ENCODE measurements at regions of chr16 and their contacts with region 1.

Region 1: GRCh38 chr16:29815793-29816693 is at the start of gene PAGR1:
- DNase-seq: peak; percentile 99
- ATAC-seq: peak; percentile 87
- H3K4me3 ChIP-seq: peak within 1 kb of the TSS; percentile 44 to 60
- H3K27ac ChIP-seq: peak within 1 kb of the TSS; percentile 10 to 79
- H3K4me1 ChIP-seq: no peaks in the 10 kb centered on the region
- H3K27me3 ChIP-seq: no peaks in the 10 kb centered on the region
- total RNA-seq, gene PAGR1: 14.9 to 29.7 TPM

Region 2: DNA sequence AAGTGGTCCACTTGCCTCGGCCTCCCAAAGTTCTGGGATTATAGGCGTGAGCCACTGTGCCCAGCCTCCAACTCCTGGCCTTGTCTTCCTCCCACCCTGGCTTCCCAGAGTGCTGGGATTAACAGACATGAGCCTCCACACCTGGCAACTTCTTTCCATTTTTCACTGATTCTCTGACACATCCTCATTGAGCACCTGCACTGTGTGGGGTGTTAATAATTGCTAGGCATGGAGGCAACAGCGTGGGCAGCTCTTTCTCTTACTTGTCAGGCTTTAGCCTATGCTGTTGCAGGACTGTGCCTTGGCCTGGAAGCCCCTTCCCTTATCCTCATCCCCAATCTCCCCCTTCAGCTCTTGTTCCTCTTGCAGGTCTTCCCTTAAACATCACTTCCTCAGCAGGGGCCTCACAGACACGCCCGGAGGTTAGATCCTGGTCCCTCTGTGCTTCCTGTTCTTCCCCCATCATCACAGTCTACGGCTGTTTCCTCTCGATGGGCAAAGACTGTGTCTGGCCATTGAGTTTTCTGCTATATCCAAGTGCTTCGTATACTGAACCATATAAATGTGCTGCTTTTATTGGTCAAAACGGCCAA is 129.2 kb before region 1 on chr16:
- intact Hi-C with region 1: no loop called
- DNase-seq: no peak
- ATAC-seq: no peak
- H3K4me3 ChIP-seq: no peak overlapping the region
- H3K27ac ChIP-seq: no peak overlapping the region
- H3K4me1 ChIP-seq: no peaks in the 10 kb centered on the region
- H3K27me3 ChIP-seq: no peaks in the 10 kb centered on the region

Region 3: DNA sequence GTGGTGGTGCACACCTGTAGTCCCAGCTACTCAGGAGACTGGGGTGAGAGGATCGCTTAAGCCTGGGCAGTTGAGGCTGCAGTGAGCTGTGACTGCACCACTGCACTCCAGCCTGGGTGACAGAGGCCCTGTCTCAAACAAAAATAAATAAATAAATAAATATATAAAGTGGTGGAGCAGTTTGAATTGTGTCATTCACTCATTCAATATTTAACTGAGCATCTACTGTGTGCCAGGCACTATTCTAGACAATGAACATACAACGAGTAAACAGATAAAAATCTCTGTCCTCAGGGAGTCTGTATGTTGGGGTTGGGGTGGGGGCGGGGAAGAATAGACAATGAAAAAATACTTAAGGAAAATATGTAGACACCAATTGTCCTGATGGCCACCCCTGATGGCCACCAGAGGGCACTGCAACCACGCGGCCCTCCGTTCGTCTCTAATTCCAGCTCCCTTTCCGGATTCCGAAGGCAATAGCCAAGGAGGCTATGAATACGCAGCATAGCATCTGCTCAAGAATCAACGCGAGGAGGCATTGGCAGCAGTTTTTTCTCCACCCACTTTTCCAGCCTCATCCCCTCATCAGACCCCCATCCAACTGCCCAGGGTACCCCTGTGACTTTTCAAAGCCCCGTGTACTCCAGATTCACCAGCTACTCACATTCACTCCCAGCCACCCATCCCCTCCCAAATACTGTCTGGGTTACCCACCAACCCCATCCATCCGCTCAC is 115.6 kb before region 1 on chr16:
- intact Hi-C with region 1: loop called in 1 of 2 experiments (anchors 10 kb)
- DNase-seq: peak; percentile 83 to 89
- ATAC-seq: peak; percentile 92
- H3K4me3 ChIP-seq: no peak overlapping the region
- H3K27ac ChIP-seq: no peak overlapping the region
- H3K4me1 ChIP-seq: no peaks in the 10 kb centered on the region
- H3K27me3 ChIP-seq: no peaks in the 10 kb centered on the region

Region 4: DNA sequence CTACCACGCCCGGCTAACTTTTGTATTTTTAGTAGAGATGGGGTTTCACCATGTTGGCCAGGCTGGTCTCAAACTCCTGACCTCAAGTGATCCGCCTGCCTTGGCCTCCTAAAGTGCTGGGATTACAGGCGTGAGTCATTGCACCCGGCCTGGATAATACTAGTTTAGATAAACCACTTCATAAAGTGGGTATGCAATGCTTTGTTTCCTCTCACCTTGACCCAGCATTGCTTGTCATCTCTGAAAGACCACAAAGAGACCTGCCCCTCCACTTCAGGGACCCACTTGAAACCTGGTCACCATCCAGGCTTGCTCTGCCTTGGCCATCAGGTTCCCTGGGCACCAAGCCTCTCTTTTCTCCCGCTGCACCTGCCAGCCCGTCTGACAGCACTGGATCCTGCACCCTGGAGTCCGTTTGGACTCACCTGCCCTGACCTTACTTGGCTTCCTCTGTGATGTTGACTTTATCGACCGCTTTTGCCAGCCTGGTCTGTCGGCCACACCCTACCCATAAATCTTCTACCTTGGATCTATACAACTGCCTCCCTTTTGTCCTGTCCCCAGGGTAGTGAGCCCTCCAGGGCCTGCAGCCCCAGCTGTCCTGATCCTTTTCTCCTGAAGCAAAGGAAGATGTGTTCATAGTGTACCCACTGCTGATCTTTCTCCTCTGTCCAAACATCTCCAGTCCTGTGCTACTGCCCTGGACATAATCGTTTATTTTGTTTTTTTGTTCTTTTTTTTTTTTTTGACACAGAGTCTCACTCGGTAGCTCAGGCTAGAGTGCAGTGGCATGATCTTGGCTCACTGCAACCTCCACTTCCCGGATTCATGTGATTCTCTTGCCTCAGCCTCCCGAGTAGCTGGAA is 50.6 kb before region 1 on chr16:
- intact Hi-C with region 1: no loop called
- DNase-seq: no peak
- ATAC-seq: no peak
- H3K4me3 ChIP-seq: no peak overlapping the region
- H3K27ac ChIP-seq: no peak overlapping the region
- H3K4me1 ChIP-seq: no peaks in the 10 kb centered on the region
- H3K27me3 ChIP-seq: no peaks in the 10 kb centered on the region

Region 5: GRCh38 chr16:29862884-29863668 is 47.0 kb after region 1 on chr16 and contains the start of gene CDIPT:
- intact Hi-C with region 1: loop called (anchors 5 kb)
- DNase-seq: peak; percentile 95 to 96
- ATAC-seq: peak; percentile 97
- H3K4me3 ChIP-seq: peak within 1 kb of the TSS; percentile 58 to 80
- H3K27ac ChIP-seq: peak within 1 kb of the TSS; percentile 2 to 41
- H3K4me1 ChIP-seq: peaks cover 0 to 2% of the 10 kb centered on the region in 2 donors
- H3K27me3 ChIP-seq: no peaks in the 10 kb centered on the region
- total RNA-seq, gene CDIPT: 63.6 to 81.1 TPM

Region 6: DNA sequence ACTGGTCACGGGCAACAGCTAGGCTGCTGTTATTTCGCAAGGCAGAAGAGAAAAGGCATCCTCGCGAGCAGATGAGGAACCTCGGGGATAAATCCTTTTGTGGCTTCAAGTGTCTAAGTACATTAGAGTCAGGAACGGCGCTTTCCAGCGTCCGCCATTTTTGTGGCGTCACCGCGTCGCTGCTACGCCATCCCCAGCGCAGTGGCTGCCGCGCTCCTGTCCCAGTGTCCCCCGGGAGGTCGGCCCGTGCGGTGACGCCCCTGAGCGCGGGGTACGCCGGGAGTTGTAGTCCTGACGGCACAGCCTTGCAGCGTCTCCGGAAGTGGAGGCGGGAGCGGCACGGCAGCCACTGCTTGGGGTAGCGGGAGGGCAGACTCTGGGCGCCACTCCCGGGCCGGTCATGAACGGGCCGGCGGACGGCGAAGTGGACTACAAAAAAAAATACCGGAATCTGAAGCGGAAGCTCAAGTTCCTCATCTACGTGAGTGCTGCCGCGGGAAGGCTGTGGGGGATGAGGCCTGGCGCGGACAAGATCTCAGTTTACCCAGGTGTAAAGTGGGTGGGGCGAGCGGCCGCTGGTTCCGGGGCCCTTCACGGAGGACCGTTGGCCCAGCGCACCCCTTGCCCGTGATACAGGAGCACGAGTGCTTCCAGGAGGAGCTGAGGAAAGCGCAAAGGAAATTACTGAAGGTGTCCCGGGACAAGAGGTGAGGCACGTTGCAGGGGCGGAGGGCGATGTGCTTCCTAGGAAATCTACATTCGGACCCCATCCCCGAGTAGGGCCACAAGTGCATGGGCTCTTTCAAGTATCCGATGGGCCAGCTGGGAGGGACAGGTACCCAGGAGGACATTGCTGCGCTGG is 180.1 kb after region 1 on chr16 and contains the start of gene INO80E:
- intact Hi-C with region 1: loop called in 1 of 2 experiments (anchors 10 kb)
- DNase-seq: peak; percentile 99 to 100
- ATAC-seq: peak; percentile 99
- H3K4me3 ChIP-seq: peak within 1 kb of the TSS; percentile 62 to 66
- H3K27ac ChIP-seq: peak within 1 kb of the TSS in 1 of 2 donors; percentile 79
- H3K4me1 ChIP-seq: no peaks in the 10 kb centered on the region
- H3K27me3 ChIP-seq: no peaks in the 10 kb centered on the region
- total RNA-seq, gene INO80E: 46.1 to 73.1 TPM

Region 7: DNA sequence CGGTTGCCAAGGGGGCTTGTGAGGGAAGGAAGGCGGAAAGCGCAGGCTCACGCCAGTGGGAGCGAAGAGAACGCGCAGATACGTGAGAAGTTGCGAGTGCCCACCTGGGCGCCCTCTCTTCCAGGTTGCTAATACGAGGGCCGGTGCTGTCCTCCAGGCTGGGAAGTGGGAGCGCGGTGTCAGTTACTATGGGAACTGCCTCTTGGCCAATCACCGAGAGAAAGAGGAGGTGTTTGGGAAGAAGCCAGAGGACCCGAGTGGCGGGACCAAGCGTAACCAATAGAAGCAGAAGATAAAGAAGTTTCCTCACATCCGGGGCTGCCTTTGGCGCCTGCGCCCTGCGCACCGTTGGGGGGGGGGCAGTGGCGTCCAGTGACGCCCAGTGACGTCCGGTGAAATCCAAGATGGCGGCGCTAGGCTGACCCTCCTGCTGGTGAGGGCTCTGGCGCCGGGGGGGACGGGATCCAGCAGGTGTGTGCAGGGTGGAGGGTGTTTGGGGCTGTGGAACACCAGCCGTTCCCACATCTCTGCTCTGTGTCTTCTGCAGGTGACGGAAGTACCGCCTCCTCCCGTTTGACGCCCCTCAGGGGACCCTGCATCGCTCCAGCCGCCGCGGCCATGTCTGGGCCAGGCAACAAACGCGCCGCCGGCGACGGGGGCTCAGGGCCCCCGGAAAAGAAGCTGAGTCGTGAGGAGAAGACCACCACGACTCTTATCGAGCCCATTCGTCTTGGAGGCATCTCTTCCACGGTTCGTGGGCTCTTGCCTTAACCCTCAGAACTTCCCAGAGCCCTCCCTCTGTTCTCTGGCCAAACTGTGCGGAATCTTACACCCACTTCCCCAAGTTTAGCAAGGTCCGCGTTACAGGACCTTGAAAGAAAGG is 946.1 kb after region 1 on chr16 and contains the starts of genes CFAP119 and RNF40:
- intact Hi-C with region 1: loop called in 1 of 2 experiments (anchors 10 kb)
- DNase-seq: peak; percentile 97 to 98
- ATAC-seq: peak; percentile 98
- H3K4me3 ChIP-seq: peak within 1 kb of the TSS; percentile 66 to 69
- H3K27ac ChIP-seq: peak within 1 kb of the TSS; percentile 15 to 78
- H3K4me1 ChIP-seq: peaks cover 0 to 5% of the 10 kb centered on the region in 2 donors
- H3K27me3 ChIP-seq: no peaks in the 10 kb centered on the region
- total RNA-seq, gene CFAP119: 0.52 to 2.7 TPM
- total RNA-seq, gene RNF40: 73.9 to 90.2 TPM

Measured in aorta (tissue), 5 donors.